CD4-positive, alpha-beta T cell (primary cell): ENCODE measurements at regions of chr10 and their contacts with region 1.

Region 1: GRCh38 chr10:124626759-124627380 is 117.3 kb downstream of the FAM53B start:
- DNase-seq: peak in 13 of 14 experiments; percentile 25 to 77 (median 49)
- ATAC-seq: peak; percentile 89
- H3K4me3 ChIP-seq: no peak overlapping the region
- H3K4me3 Mint-ChIP-seq: peak overlapping the region; percentile 23
- H3K27ac ChIP-seq: peak overlapping the region; percentile 18 to 68
- H3K27ac Mint-ChIP-seq: peak overlapping the region; percentile 92
- H3K4me1 ChIP-seq: peaks cover 86% of the 10 kb centered on the region
- H3K4me1 Mint-ChIP-seq: peaks cover 49% of the 10 kb centered on the region
- H3K27me3 ChIP-seq: no peaks in the 10 kb centered on the region
- H3K27me3 Mint-ChIP-seq: no peaks in the 10 kb centered on the region
- CTCF ChIP-seq: peak; percentile 27

Region 2: DNA sequence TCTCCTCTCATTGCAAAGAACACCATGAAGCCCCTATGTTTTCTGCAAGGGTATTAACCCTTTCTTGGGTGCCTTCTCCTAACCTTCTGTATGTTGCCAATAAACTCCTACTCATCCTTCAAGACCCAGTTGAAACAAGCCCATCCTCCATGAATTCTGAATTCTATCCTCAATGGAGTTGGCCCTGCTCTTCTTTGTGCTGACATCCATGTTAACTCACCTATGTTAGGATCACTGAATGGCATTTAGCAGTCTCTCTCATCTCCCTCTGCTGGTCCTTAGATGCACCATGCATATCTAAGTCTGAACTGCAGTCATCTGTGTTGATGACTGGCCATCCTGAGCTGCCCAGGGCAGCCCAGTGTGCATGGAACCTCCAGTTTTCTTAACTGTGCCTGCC is 1342.8 kb before region 1 on chr10:
- CTCF ChIA-PET with region 1: no interaction called
- POLR2A ChIA-PET with region 1: no interaction called
- intact Hi-C with region 1: no loop called
- DNase-seq: no peak
- ATAC-seq: no peak
- H3K4me3 ChIP-seq: no peak overlapping the region
- H3K4me3 Mint-ChIP-seq: no peak overlapping the region
- H3K27ac ChIP-seq: no peak overlapping the region
- H3K27ac Mint-ChIP-seq: no peak overlapping the region
- H3K4me1 ChIP-seq: no peaks in the 10 kb centered on the region
- H3K4me1 Mint-ChIP-seq: no peaks in the 10 kb centered on the region
- H3K27me3 ChIP-seq: no peaks in the 10 kb centered on the region
- H3K27me3 Mint-ChIP-seq: no peaks in the 10 kb centered on the region
- CTCF ChIP-seq: no peak

Region 3: DNA sequence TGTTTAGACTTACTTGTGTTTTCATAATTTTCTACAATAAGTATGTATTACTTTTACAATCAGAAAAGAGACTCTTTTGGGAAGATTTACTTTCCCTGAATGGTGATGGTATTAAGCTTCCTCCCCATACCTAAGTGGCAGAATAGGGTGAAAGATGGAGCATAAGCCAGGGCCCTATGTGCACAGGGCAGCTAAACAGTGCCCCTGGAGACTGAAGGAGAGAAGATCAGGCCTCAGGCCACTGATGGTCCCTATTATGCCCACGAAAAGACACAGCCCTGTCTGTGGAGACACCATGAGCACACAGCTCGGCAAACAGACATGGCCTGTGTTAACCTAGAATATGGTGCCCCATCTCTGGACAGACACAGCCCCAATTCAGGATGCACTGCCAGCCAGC is 347.6 kb before region 1 on chr10:
- CTCF ChIA-PET with region 1: no interaction called
- POLR2A ChIA-PET with region 1: no interaction called
- intact Hi-C with region 1: no loop called
- DNase-seq: no peak
- ATAC-seq: no peak
- H3K4me3 ChIP-seq: no peak overlapping the region
- H3K4me3 Mint-ChIP-seq: no peak overlapping the region
- H3K27ac ChIP-seq: no peak overlapping the region
- H3K27ac Mint-ChIP-seq: no peak overlapping the region
- H3K4me1 ChIP-seq: no peaks in the 10 kb centered on the region
- H3K4me1 Mint-ChIP-seq: no peaks in the 10 kb centered on the region
- H3K27me3 ChIP-seq: peaks cover 0 to 3% of the 10 kb centered on the region in 2 experiments
- H3K27me3 Mint-ChIP-seq: no peaks in the 10 kb centered on the region
- CTCF ChIP-seq: no peak

Region 4: DNA sequence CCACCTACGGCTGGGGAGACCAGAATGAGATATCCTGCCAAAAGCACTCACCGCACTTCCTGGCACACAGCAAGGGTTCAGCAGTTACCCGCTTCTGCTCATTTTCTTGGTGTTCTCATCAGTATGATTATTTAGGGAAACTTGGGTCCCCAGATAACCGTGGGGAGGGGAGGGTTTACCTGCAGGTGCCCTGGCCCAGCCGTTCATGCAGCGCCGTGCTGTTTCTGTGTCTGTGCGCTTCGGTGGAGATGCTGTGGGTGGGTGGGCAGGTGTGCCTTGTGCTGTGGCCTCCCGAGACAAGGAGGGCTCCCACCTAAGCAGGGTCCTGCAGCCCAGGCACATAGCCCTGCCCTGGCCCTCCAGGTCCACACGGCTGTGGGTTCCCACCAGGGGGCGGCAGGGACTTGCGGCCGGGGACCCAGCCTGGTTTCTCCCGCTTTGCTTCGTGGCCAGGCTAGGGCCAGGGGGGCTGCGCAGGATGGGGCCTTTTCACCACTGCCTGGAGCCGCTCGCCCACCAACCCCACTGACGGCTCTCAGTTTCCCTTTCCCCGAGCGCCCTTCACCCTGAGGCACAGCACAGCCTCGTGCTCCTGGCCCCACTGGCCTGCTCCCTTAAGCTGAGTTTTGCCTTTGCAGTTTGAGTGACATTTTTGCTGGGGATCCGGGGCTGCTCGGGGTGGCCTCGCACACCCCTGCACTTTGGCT is 86.8 kb before region 1 on chr10:
- CTCF ChIA-PET with region 1: no interaction called
- POLR2A ChIA-PET with region 1: no interaction called
- intact Hi-C with region 1: loop called in 1 of 2 experiments (anchors 5 kb)
- DNase-seq: peak; percentile 55 to 82 (median 69)
- ATAC-seq: peak; percentile 90
- H3K4me3 ChIP-seq: no peak overlapping the region
- H3K4me3 Mint-ChIP-seq: no peak overlapping the region
- H3K27ac ChIP-seq: no peak overlapping the region
- H3K27ac Mint-ChIP-seq: no peak overlapping the region
- H3K4me1 ChIP-seq: peaks cover 13% of the 10 kb centered on the region
- H3K4me1 Mint-ChIP-seq: peaks cover 9% of the 10 kb centered on the region
- H3K27me3 ChIP-seq: no peaks in the 10 kb centered on the region
- H3K27me3 Mint-ChIP-seq: no peaks in the 10 kb centered on the region
- CTCF ChIP-seq: peak; percentile 70

Region 5: GRCh38 chr10:124579011-124579399 is 47.9 kb before region 1 on chr10:
- CTCF ChIA-PET with region 1: no interaction called
- POLR2A ChIA-PET with region 1: no interaction called
- intact Hi-C with region 1: no loop called
- DNase-seq: no peak
- ATAC-seq: no peak
- H3K4me3 ChIP-seq: no peak overlapping the region
- H3K4me3 Mint-ChIP-seq: no peak overlapping the region
- H3K27ac ChIP-seq: no peak overlapping the region
- H3K27ac Mint-ChIP-seq: no peak overlapping the region
- H3K4me1 ChIP-seq: no peaks in the 10 kb centered on the region
- H3K4me1 Mint-ChIP-seq: no peaks in the 10 kb centered on the region
- H3K27me3 ChIP-seq: no peaks in the 10 kb centered on the region
- H3K27me3 Mint-ChIP-seq: no peaks in the 10 kb centered on the region
- CTCF ChIP-seq: no peak

Region 6: DNA sequence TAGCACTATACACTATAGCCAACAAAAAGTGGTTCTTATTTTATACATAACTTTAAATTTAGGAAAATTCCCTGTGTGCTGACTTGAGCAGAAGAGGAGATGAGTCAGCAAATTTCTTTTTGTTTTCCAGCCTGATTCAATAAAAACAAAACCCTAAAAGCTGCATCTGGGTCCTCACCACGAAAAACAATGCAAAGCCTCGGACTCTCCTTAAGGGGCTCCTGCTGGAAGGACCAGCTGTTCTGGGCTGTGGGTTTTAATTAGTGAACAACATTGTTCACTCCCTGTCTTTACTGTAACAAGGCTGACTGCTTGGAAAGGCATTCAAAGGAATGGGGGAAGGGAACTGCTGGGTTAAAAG is 1521.3 kb after region 1 on chr10:
- CTCF ChIA-PET with region 1: no interaction called
- POLR2A ChIA-PET with region 1: no interaction called
- intact Hi-C with region 1: no loop called
- DNase-seq: no peak
- ATAC-seq: no peak
- H3K4me3 ChIP-seq: no peak overlapping the region
- H3K4me3 Mint-ChIP-seq: no peak overlapping the region
- H3K27ac ChIP-seq: no peak overlapping the region
- H3K27ac Mint-ChIP-seq: no peak overlapping the region
- H3K4me1 ChIP-seq: no peaks in the 10 kb centered on the region
- H3K4me1 Mint-ChIP-seq: no peaks in the 10 kb centered on the region
- H3K27me3 ChIP-seq: no peaks in the 10 kb centered on the region
- H3K27me3 Mint-ChIP-seq: no peaks in the 10 kb centered on the region
- CTCF ChIP-seq: no peak